B cell (primary cell): ENCODE measurements at regions of chr11 and their contacts with region 1.

Region 1: DNA sequence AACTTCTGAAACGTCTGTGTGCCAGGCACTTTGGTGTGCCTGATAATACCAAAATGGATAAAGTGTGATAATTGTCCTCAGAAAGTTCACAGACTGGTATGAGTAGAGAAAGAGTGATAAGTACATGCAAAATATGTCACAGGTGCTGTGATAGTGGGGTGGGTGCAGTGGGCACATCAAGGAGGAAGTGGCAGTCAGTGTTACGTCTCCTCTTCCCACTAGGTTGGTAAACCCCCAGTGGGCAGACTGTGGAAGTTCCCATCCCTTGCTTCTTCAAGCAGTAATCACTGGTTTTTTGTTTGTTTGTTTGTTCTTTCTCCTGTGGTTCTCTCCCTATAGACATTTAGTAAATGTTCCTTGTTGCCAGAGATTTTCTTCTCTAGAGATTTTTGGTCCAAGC is 5.4 kb downstream of the RNF121 start:
- DNase-seq: peak; percentile 76
- ATAC-seq: peak; percentile 84
- H3K4me3 ChIP-seq: no peak overlapping the region
- H3K4me3 Mint-ChIP-seq: peak overlapping the region; percentile 68
- H3K27ac ChIP-seq: peak overlapping the region; percentile 21 to 73
- H3K27ac Mint-ChIP-seq: peak overlapping the region; percentile 75
- H3K4me1 ChIP-seq: peaks cover 33 to 44% of the 10 kb centered on the region in 2 donors
- H3K4me1 Mint-ChIP-seq: peaks cover 53% of the 10 kb centered on the region
- H3K27me3 ChIP-seq: no peaks in the 10 kb centered on the region
- H3K27me3 Mint-ChIP-seq: no peaks in the 10 kb centered on the region
- CTCF ChIP-seq: no peak

Region 2: DNA sequence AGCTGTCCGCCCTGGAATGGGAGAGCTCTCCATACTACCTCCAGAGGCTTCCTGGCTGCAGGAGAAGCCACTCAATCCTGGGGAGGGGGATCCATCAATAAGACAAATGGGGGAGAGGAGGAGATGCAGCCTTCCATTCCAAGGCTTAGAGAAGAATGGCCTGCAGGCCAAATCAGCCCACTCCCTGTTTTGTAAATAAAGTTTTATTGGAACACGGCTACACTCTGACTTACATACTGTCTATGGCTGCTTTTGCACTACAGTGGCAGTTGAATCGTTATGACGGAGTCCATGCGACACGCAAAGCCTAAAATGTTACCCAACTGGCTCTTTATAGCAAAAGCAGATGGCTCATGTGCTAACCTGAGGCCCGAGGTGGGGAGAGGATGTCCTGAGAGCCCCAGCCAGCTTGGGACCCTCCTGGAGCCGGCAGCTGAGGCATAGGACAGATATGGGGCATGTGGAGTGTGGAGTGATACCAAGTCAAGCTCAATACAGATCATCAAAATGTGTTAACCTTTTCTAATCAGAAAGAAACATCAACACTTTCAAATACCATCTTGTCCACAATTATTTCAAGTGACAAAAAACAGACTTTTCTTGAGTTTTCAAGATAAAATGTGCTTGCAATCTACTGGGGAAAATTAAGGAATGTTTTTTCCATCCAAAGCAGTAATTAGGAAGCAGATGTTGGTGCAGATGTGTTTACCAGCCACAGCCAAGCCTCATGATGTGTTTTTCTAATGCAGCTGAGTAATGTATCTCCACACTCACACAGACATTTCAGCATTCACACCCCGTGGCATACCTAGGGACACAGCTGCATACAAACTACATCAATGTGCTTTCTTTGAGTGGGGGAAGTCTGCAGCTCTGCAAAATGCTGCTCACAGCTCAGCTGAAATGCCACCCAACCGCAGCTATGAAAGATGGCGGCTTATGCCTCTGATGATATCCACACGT is 863.4 kb before region 1 on chr11:
- CTCF ChIA-PET with region 1: no interaction called
- POLR2A ChIA-PET with region 1: no interaction called
- intact Hi-C with region 1: no loop called
- DNase-seq: no peak
- ATAC-seq: no peak
- H3K4me3 ChIP-seq: no peak overlapping the region
- H3K4me3 Mint-ChIP-seq: no peak overlapping the region
- H3K27ac ChIP-seq: no peak overlapping the region
- H3K27ac Mint-ChIP-seq: no peak overlapping the region
- H3K4me1 ChIP-seq: peaks cover 0 to 4% of the 10 kb centered on the region in 2 donors
- H3K4me1 Mint-ChIP-seq: peaks cover 3% of the 10 kb centered on the region
- H3K27me3 ChIP-seq: no peaks in the 10 kb centered on the region
- H3K27me3 Mint-ChIP-seq: peaks cover 5% of the 10 kb centered on the region
- CTCF ChIP-seq: no peak

Region 3: DNA sequence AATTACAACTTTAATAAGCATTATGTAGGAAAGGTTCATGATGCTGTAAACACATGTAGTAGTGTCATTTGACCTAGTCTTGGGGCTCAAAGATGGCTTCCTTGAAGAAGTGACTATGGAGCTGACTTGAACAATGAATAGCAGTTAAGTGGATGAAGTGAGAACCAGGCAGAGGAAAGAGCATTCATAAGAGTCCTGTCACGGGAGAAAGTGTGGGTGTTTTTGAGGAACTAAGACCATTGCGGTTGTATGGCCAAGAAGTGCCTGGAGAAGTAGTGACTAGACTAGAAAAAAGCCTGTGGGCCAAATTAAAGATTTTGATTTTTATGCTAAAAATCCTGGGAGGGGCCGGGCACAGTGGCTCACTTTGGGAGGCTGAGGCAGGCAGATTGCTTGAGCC is 57.3 kb after region 1 on chr11:
- CTCF ChIA-PET with region 1: interaction called, 3 read pairs
- POLR2A ChIA-PET with region 1: no interaction called
- intact Hi-C with region 1: loop called (anchors 5 kb)
- DNase-seq: peak; percentile 84
- ATAC-seq: peak; percentile 76
- H3K4me3 ChIP-seq: no peak overlapping the region
- H3K4me3 Mint-ChIP-seq: peak overlapping the region; percentile 7
- H3K27ac ChIP-seq: peak overlapping the region in 1 of 2 donors; percentile 22
- H3K27ac Mint-ChIP-seq: peak overlapping the region; percentile 34
- H3K4me1 ChIP-seq: peaks cover 39 to 59% of the 10 kb centered on the region in 2 donors
- H3K4me1 Mint-ChIP-seq: peaks cover 49% of the 10 kb centered on the region
- H3K27me3 ChIP-seq: no peaks in the 10 kb centered on the region
- H3K27me3 Mint-ChIP-seq: no peaks in the 10 kb centered on the region
- CTCF ChIP-seq: no peak